ENCODE measurements at regions of chr2 and their contacts with region 1.

Region 1: GRCh38 chr2:121400201-121400600 is 115.2 kb upstream of the TFCP2L1 start:
- DNase-seq: no peak
- H3K4me3 ChIP-seq: no peak overlapping the region
- H3K27ac ChIP-seq: no peak overlapping the region
- H3K4me1 ChIP-seq: peaks cover 0 to 6% (median 0%) of the 10 kb centered on the region in 6 donors
- H3K27me3 ChIP-seq: no peaks in the 10 kb centered on the region
- CTCF ChIP-seq: no peak
- POLR2A ChIP-seq: no peak

Region 2: DNA sequence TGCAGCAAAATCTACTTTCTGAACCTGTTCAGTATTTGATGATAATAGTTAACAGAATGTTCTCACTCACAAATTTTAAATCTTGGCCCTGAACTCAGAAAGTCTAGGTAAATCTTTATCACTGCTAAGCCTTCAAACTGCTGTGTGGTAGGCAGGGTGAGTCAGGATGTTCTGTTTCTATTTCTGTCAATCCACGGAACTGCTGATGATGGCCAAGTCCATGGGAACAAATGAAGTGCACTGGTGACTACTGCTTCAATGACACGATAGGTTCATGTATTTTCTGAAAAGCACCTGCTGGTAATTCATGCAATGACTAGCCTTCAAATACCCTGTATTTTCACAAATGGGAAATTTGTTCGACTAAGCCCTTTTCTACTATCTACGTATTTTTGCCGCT is 322.3 kb after region 1 on chr2:
- intact Hi-C with region 1: loop called (anchors 5 kb)
- DNase-seq: no peak
- H3K4me3 ChIP-seq: no peak overlapping the region
- H3K27ac ChIP-seq: no peak overlapping the region
- H3K4me1 ChIP-seq: peaks cover 0 to 11% (median 6%) of the 10 kb centered on the region in 6 donors
- H3K27me3 ChIP-seq: no peaks in the 10 kb centered on the region
- CTCF ChIP-seq: no peak
- POLR2A ChIP-seq: no peak